Activated CD4-positive, alpha-beta T cell treated with anti-CD3 and anti-CD28 coated beads, Interleukin-2, amount 10 ng/mL, durations not matched to agents 24 days and 14 days (primary cell): ENCODE measurements at regions of chr5 and their contacts with region 1.

Region 1: GRCh38 chr5:56080375-56081052 is 85.8 kb upstream of the IL6ST start:
- DNase-seq: peak; percentile 71
- H3K4me3 Mint-ChIP-seq: no peak overlapping the region
- H3K27ac Mint-ChIP-seq: peak overlapping the region; percentile 65
- H3K4me1 Mint-ChIP-seq: peaks cover 28% of the 10 kb centered on the region
- H3K27me3 Mint-ChIP-seq: peaks cover 2% of the 10 kb centered on the region

Region 2: DNA sequence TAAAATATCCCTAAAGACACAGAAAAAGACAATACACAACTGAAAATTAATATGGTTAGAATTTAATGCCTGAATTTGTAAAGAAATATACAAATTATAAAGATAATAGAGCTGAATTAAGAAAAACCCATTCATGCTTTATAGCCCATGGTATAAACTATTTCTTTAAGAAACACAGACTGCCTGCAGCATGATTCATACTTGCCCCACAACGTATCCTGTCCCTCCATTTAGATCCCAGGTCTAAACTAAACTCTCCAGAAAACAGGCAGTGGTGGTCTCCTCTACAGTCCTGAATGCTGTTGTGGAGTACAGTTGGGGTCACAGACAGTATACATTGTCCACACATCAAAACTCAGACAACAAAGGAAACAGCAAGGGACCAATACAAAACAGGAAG is 110.6 kb before region 1 on chr5:
- intact Hi-C with region 1: no loop called
- DNase-seq: peak; percentile 53
- H3K4me3 Mint-ChIP-seq: no peak overlapping the region
- H3K27ac Mint-ChIP-seq: peak overlapping the region; percentile 2
- H3K4me1 Mint-ChIP-seq: peaks cover 32% of the 10 kb centered on the region
- H3K27me3 Mint-ChIP-seq: no peaks in the 10 kb centered on the region

Region 3: GRCh38 chr5:56012281-56012963 is 68.1 kb before region 1 on chr5:
- intact Hi-C with region 1: loop called (anchors 2 kb)
- DNase-seq: peak; percentile 84
- H3K4me3 Mint-ChIP-seq: peak overlapping the region; percentile 47
- H3K27ac Mint-ChIP-seq: peak overlapping the region; percentile 47
- H3K4me1 Mint-ChIP-seq: peaks cover 28% of the 10 kb centered on the region
- H3K27me3 Mint-ChIP-seq: no peaks in the 10 kb centered on the region

Region 4: GRCh38 chr5:56066931-56067465 is 13.5 kb before region 1 on chr5:
- intact Hi-C with region 1: loop called (anchors 2 kb)
- DNase-seq: no peak
- H3K4me3 Mint-ChIP-seq: no peak overlapping the region
- H3K27ac Mint-ChIP-seq: no peak overlapping the region
- H3K4me1 Mint-ChIP-seq: peaks cover 41% of the 10 kb centered on the region
- H3K27me3 Mint-ChIP-seq: peaks cover 4% of the 10 kb centered on the region

Region 5: DNA sequence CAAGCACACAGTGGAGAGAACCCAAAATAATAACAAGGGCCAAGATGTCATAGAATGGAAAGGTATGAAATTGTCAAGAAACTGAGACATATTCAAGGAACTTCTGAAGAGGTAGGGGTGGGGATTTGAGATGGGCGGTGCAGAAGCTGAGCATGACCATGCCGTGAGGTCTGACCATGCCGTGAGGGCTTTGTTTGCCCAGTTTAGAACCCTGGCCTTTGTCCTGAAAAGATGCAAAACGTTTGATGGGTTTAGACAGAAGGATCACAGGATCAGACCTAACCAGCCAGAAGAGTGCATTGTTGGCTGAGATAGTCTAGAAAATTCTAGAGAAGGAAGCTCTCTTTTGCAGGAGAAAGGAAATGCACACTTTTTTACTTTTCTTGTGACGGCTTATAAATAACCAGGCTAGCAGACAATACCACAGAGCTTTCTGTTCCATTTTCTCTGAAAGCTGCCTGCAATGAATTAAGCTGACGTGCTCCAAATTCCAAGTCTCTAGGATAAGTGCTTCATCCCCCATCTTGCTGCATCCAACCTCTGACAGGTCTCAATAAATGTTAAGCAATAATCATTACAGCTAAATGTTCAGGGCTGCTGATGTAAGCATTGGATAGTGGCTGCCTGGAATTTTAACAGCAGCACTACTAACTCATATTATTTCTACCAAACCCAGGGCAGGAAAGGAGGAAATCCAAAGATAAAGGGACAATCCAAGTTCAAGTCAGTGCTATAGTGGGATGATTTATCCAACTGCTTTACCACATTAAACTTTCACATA is 25.2 kb after region 1 on chr5:
- intact Hi-C with region 1: no loop called
- DNase-seq: no peak
- H3K4me3 Mint-ChIP-seq: peak overlapping the region; percentile 59
- H3K27ac Mint-ChIP-seq: peak overlapping the region; percentile 74
- H3K4me1 Mint-ChIP-seq: peaks cover 45% of the 10 kb centered on the region
- H3K27me3 Mint-ChIP-seq: no peaks in the 10 kb centered on the region